CD8-positive, alpha-beta T cell (primary cell): ENCODE measurements at regions of chr17 and their contacts with region 1.

Region 1: GRCh38 chr17:82236142-82236981 is 7.5 kb downstream of the SLC16A3 start:
- DNase-seq: peak in 8 of 9 experiments; percentile 56 to 82 (median 72)
- ATAC-seq: peak; percentile 52
- H3K4me3 ChIP-seq: no peak overlapping the region
- H3K4me3 Mint-ChIP-seq: no peak overlapping the region
- H3K27ac ChIP-seq: peak overlapping the region in 1 of 2 experiments; percentile 6
- H3K27ac Mint-ChIP-seq: peak overlapping the region; percentile 55
- H3K4me1 ChIP-seq: peaks cover 54% of the 10 kb centered on the region
- H3K4me1 Mint-ChIP-seq: peaks cover 40% of the 10 kb centered on the region
- H3K27me3 ChIP-seq: no peaks in the 10 kb centered on the region
- H3K27me3 Mint-ChIP-seq: no peaks in the 10 kb centered on the region
- CTCF ChIP-seq: peak; percentile 82

Region 2: DNA sequence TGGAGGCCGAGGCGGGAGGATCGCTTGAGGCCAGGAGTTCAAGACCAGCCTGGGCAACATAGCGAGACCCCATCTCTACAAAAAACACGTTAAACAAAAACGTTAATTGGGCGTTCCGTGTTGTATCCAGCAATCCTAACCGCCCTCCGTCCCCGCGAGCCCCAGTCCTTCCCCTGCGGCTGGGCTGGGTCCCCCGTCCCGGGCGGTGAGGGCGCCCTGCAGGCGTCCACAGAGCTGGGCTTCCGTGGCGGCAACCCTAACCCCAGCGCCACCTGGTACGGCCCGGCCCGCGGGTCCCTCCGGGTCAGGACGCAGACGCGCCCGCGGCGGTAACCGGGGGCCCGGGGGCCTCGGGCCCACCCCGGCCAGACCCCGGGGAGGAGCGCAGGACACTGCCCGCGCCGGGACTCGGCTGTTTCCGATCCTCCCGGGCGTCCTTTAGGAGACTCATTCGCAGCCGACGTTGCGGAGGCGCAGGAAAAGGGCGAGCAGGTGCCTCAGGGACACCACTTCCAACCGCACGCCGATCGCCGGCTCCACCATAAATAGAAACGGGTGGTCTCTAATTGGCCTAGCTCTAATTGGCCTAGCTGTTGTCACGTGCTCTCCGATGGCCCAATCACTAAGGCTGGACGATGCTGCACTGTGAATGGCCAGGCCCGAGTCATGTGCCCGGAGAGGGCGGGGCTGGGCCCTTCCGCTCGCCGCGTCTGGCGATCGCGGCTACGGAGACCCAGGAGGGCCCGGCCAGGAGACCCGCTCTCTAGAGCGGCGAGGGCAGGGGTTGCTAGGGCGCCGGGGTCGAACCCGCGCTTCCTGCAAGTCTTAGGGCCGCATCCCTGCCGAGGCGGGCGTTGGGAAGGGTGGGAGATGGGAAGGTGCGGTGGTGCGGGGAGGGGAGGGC is 56.1 kb after region 1 on chr17:
- CTCF ChIA-PET with region 1: interaction called, 66 read pairs
- POLR2A ChIA-PET with region 1: interaction called, 3 read pairs
- intact Hi-C with region 1: no loop called
- DNase-seq: peak; percentile 85 to 98 (median 90)
- ATAC-seq: peak; percentile 85
- H3K4me3 ChIP-seq: peak overlapping the region; percentile 65 to 78
- H3K4me3 Mint-ChIP-seq: peak overlapping the region; percentile 88
- H3K27ac ChIP-seq: peak overlapping the region; percentile 88 to 96
- H3K27ac Mint-ChIP-seq: peak overlapping the region; percentile 94
- H3K4me1 ChIP-seq: peaks cover 26% of the 10 kb centered on the region
- H3K4me1 Mint-ChIP-seq: peaks cover 40% of the 10 kb centered on the region
- H3K27me3 ChIP-seq: no peaks in the 10 kb centered on the region
- H3K27me3 Mint-ChIP-seq: no peaks in the 10 kb centered on the region
- CTCF ChIP-seq: no peak

Region 3: GRCh38 chr17:82302991-82303943 is 66.9 kb after region 1 on chr17:
- CTCF ChIA-PET with region 1: interaction called, 66 read pairs
- POLR2A ChIA-PET with region 1: interaction called, 8 read pairs
- intact Hi-C with region 1: loop called in 1 of 2 experiments (anchors 2 kb)
- DNase-seq: peak in 7 of 9 experiments; percentile 38 to 78 (median 53)
- ATAC-seq: peak; percentile 33
- H3K4me3 ChIP-seq: peak overlapping the region; percentile 34 to 59
- H3K4me3 Mint-ChIP-seq: peak overlapping the region; percentile 83
- H3K27ac ChIP-seq: peak overlapping the region; percentile 45 to 55
- H3K27ac Mint-ChIP-seq: peak overlapping the region; percentile 100
- H3K4me1 ChIP-seq: peaks cover 88% of the 10 kb centered on the region
- H3K4me1 Mint-ChIP-seq: peaks cover 82% of the 10 kb centered on the region
- H3K27me3 ChIP-seq: no peaks in the 10 kb centered on the region
- H3K27me3 Mint-ChIP-seq: no peaks in the 10 kb centered on the region
- CTCF ChIP-seq: no peak

Region 4: DNA sequence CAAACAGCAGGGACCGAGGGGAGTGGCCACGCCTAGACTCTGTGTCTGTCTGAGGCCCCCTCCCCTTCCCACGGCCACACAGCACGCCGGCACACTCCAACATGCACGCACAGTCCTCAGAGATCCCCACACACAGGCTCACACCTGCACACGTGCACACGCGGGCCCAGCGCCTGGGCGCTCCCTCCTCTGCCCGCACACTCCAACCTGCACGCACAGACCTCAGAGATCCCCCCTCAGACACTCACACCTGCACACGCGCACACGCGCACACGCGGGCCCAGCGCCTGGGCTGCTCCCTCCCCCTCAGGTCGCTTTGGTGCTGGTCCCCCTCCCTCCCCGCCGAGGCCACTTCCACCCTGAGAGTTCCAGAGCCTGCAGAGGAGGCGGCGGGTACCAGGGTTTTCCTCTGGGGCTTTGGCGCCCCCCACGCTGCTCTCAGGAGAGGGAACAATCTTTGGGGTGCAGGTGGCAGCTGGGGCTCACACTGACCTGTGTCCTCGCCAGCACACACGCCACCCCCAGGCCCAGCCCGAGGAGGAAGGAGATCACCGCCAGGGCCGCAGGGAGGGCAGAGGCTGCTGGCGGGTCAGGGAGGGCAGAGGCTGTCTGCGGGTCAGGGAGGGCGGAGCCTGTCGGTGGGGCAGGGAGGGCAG is 79.5 kb after region 1 on chr17:
- CTCF ChIA-PET with region 1: interaction called, 28 read pairs
- POLR2A ChIA-PET with region 1: interaction called, 5 read pairs
- intact Hi-C with region 1: loop called (anchors 1 kb)
- DNase-seq: peak in 8 of 9 experiments; percentile 46 to 83 (median 71)
- ATAC-seq: peak; percentile 43
- H3K4me3 ChIP-seq: peak overlapping the region; percentile 90 to 91
- H3K4me3 Mint-ChIP-seq: peak overlapping the region; percentile 94
- H3K27ac ChIP-seq: peak overlapping the region; percentile 76 to 78
- H3K27ac Mint-ChIP-seq: peak overlapping the region; percentile 94
- H3K4me1 ChIP-seq: peaks cover 35% of the 10 kb centered on the region
- H3K4me1 Mint-ChIP-seq: peaks cover 26% of the 10 kb centered on the region
- H3K27me3 ChIP-seq: no peaks in the 10 kb centered on the region
- H3K27me3 Mint-ChIP-seq: no peaks in the 10 kb centered on the region
- CTCF ChIP-seq: no peak

Region 5: DNA sequence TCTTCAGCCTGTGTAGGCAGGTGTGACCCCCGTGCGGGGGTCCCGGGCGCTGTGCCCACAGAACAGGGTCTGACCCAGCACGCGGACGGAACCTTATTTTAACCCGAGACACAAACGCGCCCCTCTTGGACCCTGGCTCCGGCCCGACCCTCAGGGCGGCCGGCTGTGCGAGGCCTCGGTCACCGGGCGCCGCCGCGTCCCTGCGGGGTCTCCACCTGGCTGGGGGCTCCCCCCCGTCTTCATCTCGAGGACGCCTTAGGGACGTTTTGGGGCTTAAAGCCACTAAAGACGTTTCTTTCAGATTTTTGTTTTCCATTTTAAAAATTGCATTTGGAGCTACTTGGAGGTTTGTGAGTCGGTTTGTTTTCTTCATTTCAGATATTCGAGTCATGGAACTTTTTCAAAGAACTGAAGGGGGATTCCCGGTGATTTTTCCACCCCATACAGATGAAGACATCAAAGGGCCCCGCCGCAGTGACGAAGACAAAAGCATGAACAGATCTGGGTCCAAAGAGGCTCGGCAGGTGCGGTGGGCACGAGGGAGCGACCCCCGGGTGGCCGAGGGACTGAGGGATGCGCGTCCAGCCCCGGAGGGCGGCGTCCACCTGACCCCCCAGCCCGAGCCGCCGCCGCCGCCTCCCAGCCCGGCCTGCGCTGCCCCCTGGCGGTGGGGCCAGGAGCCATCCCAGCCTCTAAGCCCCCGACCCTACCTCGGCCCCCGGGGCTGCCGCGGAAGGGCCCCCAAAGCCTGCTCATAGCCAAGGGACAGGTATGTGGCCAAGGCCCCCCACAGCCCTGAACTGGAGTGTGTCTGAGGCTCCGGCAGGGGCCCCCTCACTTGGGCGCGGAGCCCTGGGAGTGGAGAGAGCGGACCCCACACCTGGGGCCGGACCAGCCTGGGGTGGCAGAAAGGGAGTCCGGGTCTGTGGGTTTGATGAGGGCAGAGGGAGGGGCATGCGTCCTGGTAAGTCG is 84.9 kb after region 1 on chr17:
- CTCF ChIA-PET with region 1: interaction called, 28 read pairs
- POLR2A ChIA-PET with region 1: interaction called, 5 read pairs
- intact Hi-C with region 1: loop called (anchors 1 kb)
- DNase-seq: peak; percentile 46 to 94 (median 84)
- ATAC-seq: peak; percentile 44
- H3K4me3 ChIP-seq: peak overlapping the region; percentile 25 to 56
- H3K4me3 Mint-ChIP-seq: peak overlapping the region; percentile 74
- H3K27ac ChIP-seq: peak overlapping the region in 1 of 2 experiments; percentile 36
- H3K27ac Mint-ChIP-seq: peak overlapping the region; percentile 92
- H3K4me1 ChIP-seq: peaks cover 24% of the 10 kb centered on the region
- H3K4me1 Mint-ChIP-seq: peaks cover 19% of the 10 kb centered on the region
- H3K27me3 ChIP-seq: peaks cover 0 to 5% of the 10 kb centered on the region in 2 experiments
- H3K27me3 Mint-ChIP-seq: no peaks in the 10 kb centered on the region
- CTCF ChIP-seq: peak; percentile 97